Gastrocnemius medialis (tissue), 4 donors: ENCODE measurements at regions of chr3 and their contacts with region 1.

Region 1: DNA sequence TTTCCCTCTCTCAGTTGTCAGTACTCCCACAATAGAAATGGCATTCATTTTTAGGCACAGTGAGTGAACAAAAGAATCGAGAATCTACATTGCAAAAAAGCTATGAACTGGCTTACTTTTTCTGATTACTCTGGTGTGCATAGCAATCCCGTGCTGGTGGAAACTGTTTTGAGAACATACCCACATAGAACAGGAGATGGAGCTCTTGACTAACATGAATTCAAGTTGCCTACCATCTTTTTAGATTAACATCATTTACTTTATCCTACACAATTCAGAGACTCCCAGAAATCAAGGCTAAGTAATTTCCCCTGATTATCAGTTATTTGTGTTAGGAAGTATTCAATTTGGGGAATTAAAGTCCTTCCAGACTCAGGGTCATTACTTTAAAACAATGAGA is 326.6 kb downstream of the ARPP21 start:
- DNase-seq: no peak
- ATAC-seq: no peak
- H3K4me3 ChIP-seq: no peak overlapping the region
- H3K27ac ChIP-seq: no peak overlapping the region
- H3K4me1 ChIP-seq: no peaks in the 10 kb centered on the region
- H3K27me3 ChIP-seq: no peaks in the 10 kb centered on the region
- CTCF ChIP-seq: peak in 3 of 5 experiments; percentile 41 to 50 (median 44)
- POLR2A ChIP-seq: no peak

Region 2: DNA sequence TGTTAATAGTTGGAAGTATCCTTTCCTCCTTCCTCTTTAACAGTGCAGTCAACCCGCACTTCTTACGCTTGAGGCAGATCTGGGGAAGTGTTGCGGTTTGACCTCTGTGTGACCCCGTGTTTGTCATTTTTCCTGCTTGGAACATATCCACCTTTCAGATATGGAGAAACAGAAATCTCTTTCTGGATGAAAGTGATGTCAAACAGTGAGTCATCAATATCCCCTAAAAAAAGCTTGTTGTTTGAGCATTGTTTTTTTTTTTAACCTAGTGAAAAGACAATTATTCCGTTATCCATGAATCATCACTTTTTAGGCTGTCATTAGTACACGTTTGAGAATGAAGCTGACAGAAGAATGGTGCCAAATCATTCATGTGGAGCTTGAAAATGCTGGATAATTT is 32.9 kb before region 1 on chr3:
- in situ Hi-C with region 1: no loop called
- intact Hi-C with region 1: no loop called
- DNase-seq: no peak
- ATAC-seq: no peak
- H3K4me3 ChIP-seq: no peak overlapping the region
- H3K27ac ChIP-seq: no peak overlapping the region
- H3K4me1 ChIP-seq: no peaks in the 10 kb centered on the region
- H3K27me3 ChIP-seq: no peaks in the 10 kb centered on the region
- CTCF ChIP-seq: no peak
- POLR2A ChIP-seq: no peak

Region 3: DNA sequence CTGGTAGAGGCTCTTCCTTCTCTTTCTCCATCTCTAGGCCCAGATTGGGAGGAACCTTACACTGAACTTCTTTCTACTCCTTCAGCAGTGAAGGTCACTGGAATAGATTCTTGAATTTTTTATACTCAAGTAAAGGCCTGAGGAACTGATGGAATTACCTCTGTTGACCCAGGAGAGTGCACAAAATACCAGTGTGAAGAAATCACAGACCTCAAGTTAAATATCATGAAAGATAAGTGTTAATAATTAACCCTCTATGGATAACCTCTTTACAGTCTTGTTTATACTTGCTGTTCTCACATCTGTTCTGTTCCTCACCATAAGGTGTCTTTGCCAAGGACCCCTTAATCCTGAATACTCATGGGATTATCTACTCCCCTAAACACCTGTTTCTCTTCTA is 170.0 kb after region 1 on chr3:
- in situ Hi-C with region 1: no loop called
- intact Hi-C with region 1: no loop called
- DNase-seq: no peak
- ATAC-seq: no peak
- H3K4me3 ChIP-seq: no peak overlapping the region
- H3K27ac ChIP-seq: no peak overlapping the region
- H3K4me1 ChIP-seq: no peaks in the 10 kb centered on the region
- H3K27me3 ChIP-seq: no peaks in the 10 kb centered on the region
- CTCF ChIP-seq: no peak
- POLR2A ChIP-seq: no peak

Region 4: DNA sequence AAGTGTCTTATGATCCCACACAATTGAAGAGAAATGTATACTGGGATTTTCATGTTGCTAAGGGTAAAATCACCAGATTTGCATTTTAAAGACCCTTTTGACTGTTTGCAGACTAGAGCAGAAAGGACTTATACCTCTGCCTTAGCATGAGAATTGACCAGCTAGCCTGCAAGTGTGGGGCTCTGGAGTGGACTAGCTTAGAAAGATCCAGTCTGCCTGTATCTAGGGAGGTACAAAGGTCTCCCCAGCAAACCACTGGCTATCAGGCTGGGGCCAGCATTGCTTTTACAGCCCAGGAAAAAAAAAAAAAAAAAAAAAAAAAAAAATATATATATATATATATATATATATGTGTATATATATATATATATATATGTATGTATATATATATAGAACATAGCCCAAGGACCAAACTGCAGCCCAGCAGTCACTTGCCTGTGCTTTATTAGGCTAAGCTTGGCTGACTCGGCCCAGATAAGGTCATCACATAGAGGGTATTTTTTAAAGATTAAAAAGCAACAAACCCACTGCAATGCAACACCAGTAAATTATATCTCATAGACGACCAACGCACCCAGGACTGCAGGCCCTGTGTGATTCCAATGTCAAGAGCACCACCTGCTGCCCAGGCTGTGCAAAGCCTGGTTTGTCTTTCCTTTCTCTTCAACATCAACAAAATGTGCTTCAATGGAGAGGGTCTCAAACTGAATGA is 734.8 kb after region 1 on chr3:
- in situ Hi-C with region 1: loop called (anchors 5 to 25 kb)
- intact Hi-C with region 1: loop called (anchors 2 kb)
- DNase-seq: peak; percentile 8 to 18
- ATAC-seq: no peak
- H3K4me3 ChIP-seq: no peak overlapping the region
- H3K27ac ChIP-seq: no peak overlapping the region
- H3K4me1 ChIP-seq: no peaks in the 10 kb centered on the region
- H3K27me3 ChIP-seq: no peaks in the 10 kb centered on the region
- CTCF ChIP-seq: peak in 4 of 5 experiments; percentile 26 to 63 (median 46)
- POLR2A ChIP-seq: no peak

Region 5: DNA sequence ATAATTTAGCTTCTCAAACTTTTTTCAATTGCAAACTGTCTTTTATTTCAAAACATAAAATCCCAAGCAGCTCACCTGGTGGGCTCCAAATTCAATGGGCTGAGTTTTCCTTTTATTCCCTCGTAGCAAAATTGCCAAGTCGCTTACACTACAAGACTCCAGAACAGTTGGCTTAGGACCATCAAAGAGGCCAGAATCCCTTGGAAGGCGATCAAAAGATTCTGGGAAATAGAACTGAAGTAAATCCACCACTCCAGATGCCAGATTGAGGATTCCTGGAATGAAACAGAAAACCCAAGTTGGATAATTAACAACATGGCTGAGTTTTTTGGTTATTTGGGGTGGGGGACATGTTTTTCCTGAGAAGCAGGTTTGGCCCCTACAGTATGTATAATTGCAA is 886.2 kb after region 1 on chr3:
- in situ Hi-C with region 1: no loop called
- intact Hi-C with region 1: no loop called
- DNase-seq: no peak
- ATAC-seq: no peak
- H3K4me3 ChIP-seq: no peak overlapping the region
- H3K27ac ChIP-seq: no peak overlapping the region
- H3K4me1 ChIP-seq: no peaks in the 10 kb centered on the region
- H3K27me3 ChIP-seq: no peaks in the 10 kb centered on the region
- CTCF ChIP-seq: no peak
- POLR2A ChIP-seq: no peak